Common myeloid progenitor, CD34-positive (primary cell): ENCODE measurements at regions of chr1 and their contacts with region 1.

Region 1: DNA sequence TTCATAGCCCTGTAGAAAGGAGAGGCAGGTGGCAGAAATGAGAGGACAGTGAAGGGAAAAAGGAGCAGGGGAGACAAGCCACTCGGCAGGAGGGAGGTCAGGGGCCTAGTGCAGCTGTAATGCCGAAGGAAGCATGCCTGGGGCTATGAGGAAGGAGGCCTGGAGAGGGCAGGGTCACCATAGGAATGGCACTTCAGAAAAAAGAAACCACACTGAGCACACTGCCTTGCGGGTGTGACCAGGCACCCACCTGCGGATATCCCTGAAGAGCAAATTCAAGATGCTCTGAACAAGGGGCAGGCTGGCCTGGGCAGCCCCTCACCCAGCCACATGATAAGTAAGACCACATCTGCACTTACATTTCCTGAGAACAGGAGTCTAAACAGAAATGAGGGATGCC is 104.7 kb downstream of the JAK1 start:
- DNase-seq: peak; percentile 61 to 73 (median 72)
- H3K4me3 ChIP-seq: no peak overlapping the region
- H3K27ac ChIP-seq: peak overlapping the region in 1 of 2 experiments; percentile 32
- H3K4me1 ChIP-seq: peaks cover 9 to 38% (median 23%) of the 10 kb centered on the region in 4 experiments
- H3K27me3 ChIP-seq: no peaks in the 10 kb centered on the region

Region 2: DNA sequence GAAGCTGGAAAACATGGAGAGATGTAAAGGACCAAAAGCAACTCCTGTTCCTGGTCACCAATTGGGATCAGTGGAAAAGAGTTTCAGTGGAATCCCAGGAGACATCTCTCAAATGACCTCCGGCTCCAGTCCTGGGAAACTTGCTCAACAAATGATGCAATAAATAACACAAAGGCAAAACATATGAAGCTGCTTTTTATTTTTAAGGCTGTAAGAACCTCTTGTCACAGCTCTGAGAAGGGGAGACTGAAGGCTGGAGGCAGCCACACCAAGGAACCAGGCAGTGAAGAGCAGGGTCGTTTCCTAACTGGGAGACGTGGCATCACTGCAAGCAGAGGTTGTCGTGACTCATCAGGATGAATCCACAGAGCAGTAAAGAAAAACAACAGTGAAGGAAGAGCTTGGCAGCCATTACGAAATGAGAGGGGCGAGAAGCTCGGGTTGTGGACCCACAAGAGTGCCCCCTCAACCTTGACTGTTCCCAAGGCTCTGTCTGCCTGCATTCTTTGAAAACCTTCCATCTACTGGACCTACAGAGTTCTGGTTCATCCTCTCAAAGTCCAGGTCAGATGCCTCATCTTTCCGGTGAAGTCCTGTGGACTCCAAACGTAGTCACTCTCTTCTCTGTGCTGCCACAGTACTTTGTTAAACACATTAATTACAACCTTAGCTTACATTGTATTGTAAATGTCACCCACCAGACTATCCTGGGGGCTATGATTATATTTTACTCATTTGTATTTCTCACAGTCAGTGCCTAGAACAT is 72.7 kb after region 1 on chr1:
- CTCF ChIA-PET with region 1: no interaction called
- POLR2A ChIA-PET with region 1: no interaction called
- DNase-seq: peak in 2 of 3 donors; percentile 39 to 52
- H3K4me3 ChIP-seq: peak overlapping the region in 2 of 7 experiments; percentile 19
- H3K27ac ChIP-seq: peak overlapping the region in 1 of 2 experiments; percentile 56
- H3K4me1 ChIP-seq: peaks cover 12 to 27% (median 14%) of the 10 kb centered on the region in 4 experiments
- H3K27me3 ChIP-seq: no peaks in the 10 kb centered on the region

Region 3: GRCh38 chr1:65036545-65037180 is 175.1 kb after region 1 on chr1:
- CTCF ChIA-PET with region 1: interaction called, 20 read pairs
- POLR2A ChIA-PET with region 1: interaction called, 3 read pairs
- DNase-seq: no peak
- H3K4me3 ChIP-seq: no peak overlapping the region
- H3K27ac ChIP-seq: no peak overlapping the region
- H3K4me1 ChIP-seq: peaks cover 0 to 15% (median 9%) of the 10 kb centered on the region in 4 experiments
- H3K27me3 ChIP-seq: no peaks in the 10 kb centered on the region

Region 4: GRCh38 chr1:65045022-65045817 is 183.6 kb after region 1 on chr1:
- CTCF ChIA-PET with region 1: interaction called, 20 read pairs
- POLR2A ChIA-PET with region 1: interaction called, 3 read pairs
- DNase-seq: no peak
- H3K4me3 ChIP-seq: no peak overlapping the region
- H3K27ac ChIP-seq: no peak overlapping the region
- H3K4me1 ChIP-seq: peaks cover 0 to 17% (median 6%) of the 10 kb centered on the region in 4 experiments
- H3K27me3 ChIP-seq: no peaks in the 10 kb centered on the region